B cell (primary cell): ENCODE measurements at regions of chr2 and their contacts with region 1.

Region 1: GRCh38 chr2:42196403-42197267 is 27.5 kb downstream of the EML4 start:
- DNase-seq: peak; percentile 76
- ATAC-seq: peak; percentile 85
- H3K4me3 ChIP-seq: no peak overlapping the region
- H3K4me3 Mint-ChIP-seq: no peak overlapping the region
- H3K27ac ChIP-seq: peak overlapping the region in 1 of 2 donors; percentile 32
- H3K27ac Mint-ChIP-seq: peak overlapping the region; percentile 77
- H3K4me1 ChIP-seq: peaks cover 35 to 46% of the 10 kb centered on the region in 2 donors
- H3K4me1 Mint-ChIP-seq: peaks cover 65% of the 10 kb centered on the region
- H3K27me3 ChIP-seq: no peaks in the 10 kb centered on the region
- H3K27me3 Mint-ChIP-seq: no peaks in the 10 kb centered on the region
- CTCF ChIP-seq: peak; percentile 76

Region 2: GRCh38 chr2:41933585-41934320 is 262.9 kb before region 1 on chr2:
- CTCF ChIA-PET with region 1: no interaction called
- POLR2A ChIA-PET with region 1: no interaction called
- intact Hi-C with region 1: no loop called
- DNase-seq: no peak
- ATAC-seq: no peak
- H3K4me3 ChIP-seq: no peak overlapping the region
- H3K4me3 Mint-ChIP-seq: no peak overlapping the region
- H3K27ac ChIP-seq: no peak overlapping the region
- H3K27ac Mint-ChIP-seq: no peak overlapping the region
- H3K4me1 ChIP-seq: no peaks in the 10 kb centered on the region
- H3K4me1 Mint-ChIP-seq: no peaks in the 10 kb centered on the region
- H3K27me3 ChIP-seq: peaks cover 0 to 5% (median 0%) of the 10 kb centered on the region in 4 experiments
- H3K27me3 Mint-ChIP-seq: peaks cover 23% of the 10 kb centered on the region
- CTCF ChIP-seq: no peak

Region 3: GRCh38 chr2:42086500-42086953 is 110.1 kb before region 1 on chr2:
- CTCF ChIA-PET with region 1: interaction called, 26 read pairs
- POLR2A ChIA-PET with region 1: no interaction called
- intact Hi-C with region 1: no loop called
- DNase-seq: peak; percentile 75
- ATAC-seq: peak; percentile 65
- H3K4me3 ChIP-seq: no peak overlapping the region
- H3K4me3 Mint-ChIP-seq: no peak overlapping the region
- H3K27ac ChIP-seq: no peak overlapping the region
- H3K27ac Mint-ChIP-seq: no peak overlapping the region
- H3K4me1 ChIP-seq: peaks cover 3 to 4% of the 10 kb centered on the region in 2 donors
- H3K4me1 Mint-ChIP-seq: peaks cover 4% of the 10 kb centered on the region
- H3K27me3 ChIP-seq: peaks cover 0 to 17% (median 2%) of the 10 kb centered on the region in 4 experiments
- H3K27me3 Mint-ChIP-seq: peaks cover 8% of the 10 kb centered on the region
- CTCF ChIP-seq: peak; percentile 77

Region 4: DNA sequence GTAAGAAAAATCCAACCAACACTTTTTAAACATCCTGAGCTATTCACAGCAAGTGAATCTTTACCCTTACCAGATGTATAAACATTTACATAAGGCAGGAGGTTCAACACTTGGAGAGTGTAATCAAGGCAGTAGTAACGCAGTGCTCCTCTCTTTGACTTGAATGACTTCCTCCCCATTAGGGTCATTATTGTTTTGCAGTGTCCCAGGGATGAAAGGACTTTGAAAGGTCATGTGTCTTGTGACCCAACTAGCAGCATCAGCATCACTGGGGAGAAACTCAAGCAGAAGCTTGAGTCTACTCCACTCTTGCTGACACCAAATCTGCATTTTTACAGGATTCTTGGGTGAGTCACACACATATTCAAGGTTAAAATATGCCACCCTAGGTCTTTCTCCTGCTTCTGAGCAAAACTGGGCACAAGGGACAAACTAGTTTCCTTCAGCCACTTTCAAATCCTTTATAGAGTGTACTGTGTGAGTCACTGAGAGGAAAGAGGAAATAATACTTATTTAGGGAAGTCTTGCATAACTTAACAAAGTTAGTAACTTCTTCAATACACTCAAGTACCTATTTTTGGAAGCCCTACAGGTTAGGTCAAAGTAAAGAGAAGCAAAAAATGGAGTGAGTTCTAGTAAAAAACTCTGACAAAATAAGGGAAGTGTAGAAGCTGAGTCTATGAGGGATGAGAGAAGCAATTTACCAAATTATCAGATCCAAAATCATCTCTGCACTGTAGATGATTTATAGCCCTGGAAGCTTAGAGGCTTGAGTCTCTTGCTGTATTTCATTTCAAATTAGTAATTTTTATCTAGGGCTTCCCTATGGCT is 78.5 kb before region 1 on chr2:
- CTCF ChIA-PET with region 1: interaction called, 6 read pairs
- POLR2A ChIA-PET with region 1: interaction called, 3 read pairs
- intact Hi-C with region 1: loop called (anchors 5 kb)
- DNase-seq: peak; percentile 83
- ATAC-seq: peak; percentile 87
- H3K4me3 ChIP-seq: peak overlapping the region in 3 of 5 experiments; percentile 7 to 16 (median 11)
- H3K4me3 Mint-ChIP-seq: peak overlapping the region; percentile 40
- H3K27ac ChIP-seq: peak overlapping the region; percentile 62 to 75
- H3K27ac Mint-ChIP-seq: peak overlapping the region; percentile 69
- H3K4me1 ChIP-seq: peaks cover 48% of the 10 kb centered on the region in 2 donors
- H3K4me1 Mint-ChIP-seq: peaks cover 61% of the 10 kb centered on the region
- H3K27me3 ChIP-seq: no peaks in the 10 kb centered on the region
- H3K27me3 Mint-ChIP-seq: no peaks in the 10 kb centered on the region
- CTCF ChIP-seq: no peak

Region 5: GRCh38 chr2:42141687-42142546 is 54.7 kb before region 1 on chr2:
- CTCF ChIA-PET with region 1: interaction called, 12 read pairs
- POLR2A ChIA-PET with region 1: no interaction called
- intact Hi-C with region 1: no loop called
- DNase-seq: peak; percentile 67
- ATAC-seq: peak; percentile 78
- H3K4me3 ChIP-seq: peak overlapping the region in 1 of 5 experiments; percentile 6
- H3K4me3 Mint-ChIP-seq: peak overlapping the region; percentile 20
- H3K27ac ChIP-seq: peak overlapping the region in 1 of 2 donors; percentile 11
- H3K27ac Mint-ChIP-seq: peak overlapping the region; percentile 64
- H3K4me1 ChIP-seq: peaks cover 14 to 30% of the 10 kb centered on the region in 2 donors
- H3K4me1 Mint-ChIP-seq: peaks cover 36% of the 10 kb centered on the region
- H3K27me3 ChIP-seq: no peaks in the 10 kb centered on the region
- H3K27me3 Mint-ChIP-seq: no peaks in the 10 kb centered on the region
- CTCF ChIP-seq: no peak

Region 6: DNA sequence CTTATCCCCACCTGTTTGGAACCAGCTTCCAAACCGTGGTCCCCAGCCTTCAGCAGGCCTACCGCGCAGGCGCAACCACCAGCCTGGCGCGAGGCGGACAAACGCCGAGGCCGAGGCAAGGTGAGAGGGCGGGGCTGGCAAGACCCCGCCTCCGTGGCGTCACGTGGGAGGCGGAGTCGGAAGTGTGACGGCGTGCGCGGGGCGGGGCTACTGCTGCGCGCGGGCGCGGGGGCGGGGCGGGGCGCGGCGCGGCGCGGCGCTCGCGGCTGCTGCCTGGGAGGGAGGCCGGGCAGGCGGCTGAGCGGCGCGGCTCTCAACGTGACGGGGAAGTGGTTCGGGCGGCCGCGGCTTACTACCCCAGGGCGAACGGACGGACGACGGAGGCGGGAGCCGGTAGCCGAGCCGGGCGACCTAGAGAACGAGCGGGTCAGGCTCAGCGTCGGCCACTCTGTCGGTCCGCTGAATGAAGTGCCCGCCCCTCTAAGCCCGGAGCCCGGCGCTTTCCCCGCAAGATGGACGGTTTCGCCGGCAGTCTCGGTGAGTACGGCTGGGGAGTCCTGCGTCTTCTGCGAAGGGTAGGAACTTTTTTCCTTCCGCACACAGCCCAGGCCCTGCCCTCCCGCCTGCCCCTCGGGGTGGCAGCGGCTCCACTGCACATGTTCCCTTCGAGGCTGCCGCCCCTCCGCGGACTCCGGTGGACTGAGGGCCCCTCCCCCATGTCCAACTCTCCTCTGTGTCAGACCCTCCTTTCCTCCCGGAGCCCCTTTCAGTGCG is 27.3 kb before region 1 on chr2 and contains the start of gene EML4:
- CTCF ChIA-PET with region 1: interaction called, 35 read pairs
- POLR2A ChIA-PET with region 1: no interaction called
- intact Hi-C with region 1: loop called (anchors 1 kb)
- DNase-seq: peak; percentile 96
- ATAC-seq: peak; percentile 89
- H3K4me3 ChIP-seq: peak within 1 kb of the TSS; percentile 77 to 98 (median 88)
- H3K4me3 Mint-ChIP-seq: no peak within 1 kb of the TSS
- H3K27ac ChIP-seq: peak within 1 kb of the TSS; percentile 88 to 91
- H3K27ac Mint-ChIP-seq: no peak within 1 kb of the TSS
- H3K4me1 ChIP-seq: peaks cover 38 to 40% of the 10 kb centered on the region in 2 donors
- H3K4me1 Mint-ChIP-seq: peaks cover 28% of the 10 kb centered on the region
- H3K27me3 ChIP-seq: no peaks in the 10 kb centered on the region
- H3K27me3 Mint-ChIP-seq: no peaks in the 10 kb centered on the region
- CTCF ChIP-seq: no peak
- total RNA-seq, gene EML4: 134 and 138 TPM in 2 replicates

Region 7: DNA sequence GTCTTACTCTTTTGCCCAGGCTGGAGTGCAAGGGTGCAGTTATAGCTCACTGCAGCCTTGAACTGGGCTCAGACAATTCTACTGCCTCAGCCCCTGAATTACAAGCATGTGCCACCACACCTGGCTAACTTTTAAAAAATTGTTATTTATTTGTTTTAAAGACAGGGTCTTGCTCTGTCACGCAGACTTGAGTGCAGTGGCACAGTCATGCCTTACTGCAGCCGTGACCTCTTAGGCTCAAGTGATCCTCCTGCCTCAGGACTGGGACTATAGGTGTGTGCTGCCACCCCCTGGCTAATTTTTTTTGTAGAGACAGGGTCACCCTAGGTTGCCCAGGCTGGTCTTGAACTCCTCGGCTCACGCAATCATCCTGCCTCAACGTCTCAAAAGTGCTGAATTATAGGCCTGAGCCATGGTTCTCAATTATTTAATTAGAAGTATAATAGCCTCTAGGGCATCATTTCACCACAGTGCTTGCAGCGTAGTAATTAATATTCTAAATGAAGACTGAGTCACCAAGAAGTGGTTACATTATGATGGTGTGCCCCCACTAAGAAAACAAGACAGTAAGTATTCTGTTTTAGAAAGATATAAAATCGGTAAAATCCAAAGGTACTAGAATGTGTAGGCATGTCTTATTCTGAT is 42.1 kb after region 1 on chr2:
- CTCF ChIA-PET with region 1: interaction called, 6 read pairs
- POLR2A ChIA-PET with region 1: no interaction called
- intact Hi-C with region 1: loop called (anchors 5 kb)
- DNase-seq: peak; percentile 58
- ATAC-seq: peak; percentile 84
- H3K4me3 ChIP-seq: no peak overlapping the region
- H3K4me3 Mint-ChIP-seq: no peak overlapping the region
- H3K27ac ChIP-seq: no peak overlapping the region
- H3K27ac Mint-ChIP-seq: no peak overlapping the region
- H3K4me1 ChIP-seq: peaks cover 26 to 27% of the 10 kb centered on the region in 2 donors
- H3K4me1 Mint-ChIP-seq: peaks cover 73% of the 10 kb centered on the region
- H3K27me3 ChIP-seq: no peaks in the 10 kb centered on the region
- H3K27me3 Mint-ChIP-seq: no peaks in the 10 kb centered on the region
- CTCF ChIP-seq: peak; percentile 23